ENCODE measurements at regions of chr12 and their contacts with region 1.

Region 1: DNA sequence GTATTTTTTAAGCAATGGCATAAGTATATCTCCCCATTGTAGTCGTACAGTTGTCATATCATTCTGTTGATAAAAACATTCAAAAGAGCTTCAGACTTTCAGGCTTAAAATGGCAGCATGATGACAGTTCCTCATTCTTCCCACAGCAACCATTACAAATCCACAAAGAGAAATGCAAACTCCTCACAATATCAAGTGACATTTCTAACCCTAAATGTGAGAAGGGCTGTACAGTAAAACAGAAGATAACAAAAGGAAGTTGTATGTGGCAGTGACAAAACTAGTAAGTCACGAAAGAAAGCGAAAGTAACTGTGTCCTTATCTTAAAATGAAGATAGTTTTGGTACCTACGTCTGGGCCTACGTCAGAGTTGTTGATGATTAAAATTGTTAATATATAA is 46.7 kb downstream of the GXYLT1 start:
- DNase-seq: peak in 1 of 2 donors; percentile 79
- ATAC-seq: peak; percentile 71 to 88 (median 77)
- H3K4me3 ChIP-seq: peak overlapping the region; percentile 42
- H3K4me3 Mint-ChIP-seq: peak overlapping the region; percentile 92
- H3K27ac ChIP-seq: peak overlapping the region; percentile 96
- H3K27ac Mint-ChIP-seq: peak overlapping the region; percentile 95 to 98
- H3K4me1 ChIP-seq: peaks cover 7% of the 10 kb centered on the region
- H3K4me1 Mint-ChIP-seq: peaks cover 42 to 43% of the 10 kb centered on the region in 2 donors
- H3K27me3 ChIP-seq: no peaks in the 10 kb centered on the region
- H3K27me3 Mint-ChIP-seq: no peaks in the 10 kb centered on the region
- CTCF ChIP-seq: no peak

Region 2: GRCh38 chr12:42144408-42145196 is 46.6 kb after region 1 on chr12 and contains the start of gene GXYLT1:
- intact Hi-C with region 1: loop called (anchors 2 kb)
- DNase-seq: peak; percentile 79 to 86
- ATAC-seq: peak; percentile 90 to 94 (median 91)
- H3K4me3 ChIP-seq: peak within 1 kb of the TSS; percentile 73
- H3K4me3 Mint-ChIP-seq: peak within 1 kb of the TSS; percentile 96
- H3K27ac ChIP-seq: peak within 1 kb of the TSS; percentile 46
- H3K27ac Mint-ChIP-seq: peak within 1 kb of the TSS; percentile 83 to 85
- H3K4me1 ChIP-seq: peaks cover 14% of the 10 kb centered on the region
- H3K4me1 Mint-ChIP-seq: peaks cover 31 to 40% of the 10 kb centered on the region in 2 donors
- H3K27me3 ChIP-seq: no peaks in the 10 kb centered on the region
- H3K27me3 Mint-ChIP-seq: no peaks in the 10 kb centered on the region
- CTCF ChIP-seq: no peak
- total RNA-seq, gene GXYLT1: 12.3 to 13.0 (median 12.7) TPM

Region 3: GRCh38 chr12:42325653-42326474 is 227.9 kb after region 1 on chr12 and contains the starts of genes PPHLN1 and ZCRB1:
- intact Hi-C with region 1: loop called (anchors 10 kb)
- DNase-seq: peak; percentile 77 to 87
- ATAC-seq: peak; percentile 87 to 95 (median 92)
- H3K4me3 ChIP-seq: peak within 1 kb of the TSS; percentile 82
- H3K4me3 Mint-ChIP-seq: peak within 1 kb of the TSS; percentile 99
- H3K27ac ChIP-seq: peak within 1 kb of the TSS; percentile 81
- H3K27ac Mint-ChIP-seq: peak within 1 kb of the TSS; percentile 96 to 99
- H3K4me1 ChIP-seq: peaks cover 20% of the 10 kb centered on the region
- H3K4me1 Mint-ChIP-seq: peaks cover 49 to 54% of the 10 kb centered on the region in 2 donors
- H3K27me3 ChIP-seq: no peaks in the 10 kb centered on the region
- H3K27me3 Mint-ChIP-seq: no peaks in the 10 kb centered on the region
- CTCF ChIP-seq: no peak
- total RNA-seq, gene PPHLN1: 98.2 to 101 (median 101) TPM
- total RNA-seq, gene ZCRB1: 28.0 to 35.9 (median 33.8) TPM

Region 4: GRCh38 chr12:42819846-42820245 is 721.9 kb after region 1 on chr12:
- intact Hi-C with region 1: no loop called
- DNase-seq: no peak
- ATAC-seq: no peak
- H3K4me3 ChIP-seq: no peak overlapping the region
- H3K4me3 Mint-ChIP-seq: no peak overlapping the region
- H3K27ac ChIP-seq: no peak overlapping the region
- H3K27ac Mint-ChIP-seq: no peak overlapping the region
- H3K4me1 ChIP-seq: no peaks in the 10 kb centered on the region
- H3K4me1 Mint-ChIP-seq: no peaks in the 10 kb centered on the region
- H3K27me3 ChIP-seq: no peaks in the 10 kb centered on the region
- H3K27me3 Mint-ChIP-seq: no peaks in the 10 kb centered on the region
- CTCF ChIP-seq: no peak